ENCODE measurements at regions of chr12 and their contacts with region 1.

Region 1: GRCh38 chr12:1929241-1929984 is 11.0 kb upstream of the CACNA2D4 start:
- DNase-seq: no peak
- ATAC-seq: no peak
- H3K4me3 ChIP-seq: no peak overlapping the region
- H3K27ac ChIP-seq: no peak overlapping the region
- H3K4me1 ChIP-seq: no peaks in the 10 kb centered on the region; the same call in 1 of the 2 replicates
- H3K27me3 ChIP-seq: peaks cover 3 to 41% of the 10 kb centered on the region in 2 experiments; a peak in 4 of 5 replicates
- CTCF ChIP-seq: no peak
- EP300 ChIP-seq: no peak
- POLR2A ChIP-seq: no peak
- RAD21 ChIP-seq: no peak

Region 2: GRCh38 chr12:1328391-1328790 is 601.0 kb before region 1 on chr12:
- CTCF ChIA-PET with region 1: no interaction called
- POLR2A ChIA-PET with region 1: no interaction called
- in situ Hi-C with region 1: no loop called
- intact Hi-C with region 1: no loop called
- DNase-seq: no peak
- ATAC-seq: no peak
- H3K4me3 ChIP-seq: no peak overlapping the region
- H3K27ac ChIP-seq: no peak overlapping the region
- H3K4me1 ChIP-seq: 0 out of 2 replicates have a peak, but pooled peaks cover 7% of the 10 kb centered on the region
- H3K27me3 ChIP-seq: no peaks in the 10 kb centered on the region
- CTCF ChIP-seq: no peak
- EP300 ChIP-seq: no peak
- POLR2A ChIP-seq: no peak
- RAD21 ChIP-seq: no peak

Region 3: GRCh38 chr12:1910468-1910867 is 18.9 kb before region 1 on chr12:
- CTCF ChIA-PET with region 1: no interaction called
- POLR2A ChIA-PET with region 1: no interaction called
- in situ Hi-C with region 1: no loop called
- intact Hi-C with region 1: loop called (anchors 1 kb)
- DNase-seq: no peak
- ATAC-seq: no peak
- H3K4me3 ChIP-seq: no peak overlapping the region
- H3K27ac ChIP-seq: no peak overlapping the region
- H3K4me1 ChIP-seq: no peaks in the 10 kb centered on the region
- H3K27me3 ChIP-seq: peaks cover 4 to 22% of the 10 kb centered on the region in 2 experiments; a peak in 3 of 5 replicates
- CTCF ChIP-seq: no peak
- EP300 ChIP-seq: no peak
- POLR2A ChIP-seq: no peak
- RAD21 ChIP-seq: no peak

Measured in HepG2 (cell line).